ENCODE measurements at regions of chr18 and their contacts with region 1.

Region 1: DNA sequence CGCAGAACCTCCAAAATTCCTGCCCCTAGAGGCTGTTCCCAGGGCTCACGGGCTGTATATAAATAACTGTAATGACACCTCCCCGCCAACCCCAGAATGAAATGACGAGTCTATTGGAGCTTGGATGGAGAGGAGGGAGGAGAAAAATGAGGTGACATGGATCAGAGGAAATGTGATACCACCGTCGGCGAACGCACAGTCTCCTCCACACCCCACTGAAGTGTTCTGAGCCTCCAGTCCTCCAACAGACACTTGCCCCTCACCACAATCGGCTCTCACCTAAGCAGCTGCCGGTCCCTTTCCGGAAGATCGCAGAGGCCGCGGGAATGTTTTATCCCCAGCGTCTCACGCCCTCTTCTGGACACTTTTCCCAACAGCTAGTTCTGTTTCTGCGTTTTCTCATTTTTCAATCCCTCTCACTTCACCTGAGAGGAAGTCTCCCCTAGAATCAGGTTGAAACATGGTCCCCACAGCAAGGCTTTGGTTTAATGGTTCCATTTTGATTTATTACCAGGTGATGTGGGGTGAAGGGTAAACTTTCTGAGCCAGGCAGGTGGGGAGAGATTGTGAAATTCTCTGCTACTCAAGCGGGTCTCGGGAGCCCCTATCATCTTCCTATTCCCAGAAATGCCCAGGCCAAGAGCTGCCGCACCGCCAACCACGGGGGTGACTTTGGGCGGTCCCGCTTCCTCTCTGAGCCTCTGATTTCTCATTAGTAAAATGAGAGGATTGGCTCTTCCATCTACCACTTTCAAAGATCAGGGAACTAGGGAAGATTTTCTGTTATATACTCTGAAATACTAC is 9.1 kb upstream of the MYO5B start:
- DNase-seq: no peak
- ATAC-seq: peak; percentile 68
- H3K4me3 ChIP-seq: no peak overlapping the region
- H3K27ac ChIP-seq: no peak overlapping the region
- H3K4me1 ChIP-seq: no peaks in the 10 kb centered on the region
- H3K27me3 ChIP-seq: peaks cover 1 to 4% of the 10 kb centered on the region in 2 experiments; a peak in 2 of 4 replicates
- CTCF ChIP-seq: peak; percentile 52 to 65 (median 52); a peak in 5 of 6 replicates
- EP300 ChIP-seq: no peak
- POLR2A ChIP-seq: no peak
- RAD21 ChIP-seq: peak; percentile 72

Region 2: GRCh38 chr18:49858309-49859020 is 345.5 kb before region 1 on chr18:
- CTCF ChIA-PET with region 1: interaction called, 14 read pairs
- POLR2A ChIA-PET with region 1: no interaction called
- RAD21 ChIA-PET with region 1: interaction called, 12 read pairs
- SMC1A ChIA-PET with region 1: interaction called, 5 read pairs
- in situ Hi-C with region 1: no loop called
- intact Hi-C with region 1: loop called (anchors 10 kb)
- DNase-seq: no peak
- ATAC-seq: peak; percentile 70
- H3K4me3 ChIP-seq: no peak overlapping the region
- H3K27ac ChIP-seq: no peak overlapping the region
- H3K4me1 ChIP-seq: no peaks in the 10 kb centered on the region
- H3K27me3 ChIP-seq: no peaks in the 10 kb centered on the region; a peak in 1 of 4 replicates
- CTCF ChIP-seq: peak; percentile 80 to 90 (median 84)
- EP300 ChIP-seq: no peak
- POLR2A ChIP-seq: no peak
- RAD21 ChIP-seq: peak; percentile 99

Region 3: GRCh38 chr18:49980896-49981295 is 223.1 kb before region 1 on chr18:
- CTCF ChIA-PET with region 1: no interaction called
- POLR2A ChIA-PET with region 1: no interaction called
- RAD21 ChIA-PET with region 1: no interaction called
- SMC1A ChIA-PET with region 1: no interaction called
- in situ Hi-C with region 1: no loop called
- intact Hi-C with region 1: no loop called
- DNase-seq: no peak
- ATAC-seq: no peak
- H3K4me3 ChIP-seq: no peak overlapping the region
- H3K27ac ChIP-seq: no peak overlapping the region
- H3K4me1 ChIP-seq: no peaks in the 10 kb centered on the region
- H3K27me3 ChIP-seq: peaks cover 4 to 7% of the 10 kb centered on the region in 2 experiments; a peak in 3 of 4 replicates
- CTCF ChIP-seq: no peak
- EP300 ChIP-seq: no peak
- POLR2A ChIP-seq: no peak
- RAD21 ChIP-seq: no peak

Region 4: DNA sequence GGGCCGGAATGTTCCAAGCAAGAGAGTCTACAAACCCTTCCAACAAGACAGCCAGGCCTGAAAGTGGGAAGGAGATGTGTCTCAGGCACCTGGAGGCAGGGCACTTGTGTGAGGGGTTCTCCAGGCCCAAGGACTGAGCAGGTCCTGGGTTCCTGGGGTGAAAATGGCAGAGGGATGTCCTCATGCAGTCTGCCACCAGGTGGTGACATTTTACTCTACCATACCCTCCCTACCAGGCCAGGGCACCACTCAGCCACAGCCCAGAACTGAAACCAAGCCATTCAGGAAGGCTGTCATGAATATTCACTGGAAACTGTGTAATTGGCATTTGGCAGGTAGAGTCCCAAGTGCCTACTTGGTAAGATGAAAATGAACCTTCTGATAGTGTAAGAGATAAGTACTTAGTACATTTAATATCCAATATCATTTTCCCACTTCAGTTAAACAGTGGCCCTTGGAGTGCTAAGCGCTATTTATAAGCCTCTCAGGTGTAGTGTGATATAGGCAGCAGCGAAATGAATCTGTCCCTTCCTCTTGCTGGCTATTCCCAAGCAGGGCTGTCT is 194.1 kb before region 1 on chr18:
- CTCF ChIA-PET with region 1: interaction called, 30 read pairs
- POLR2A ChIA-PET with region 1: no interaction called
- RAD21 ChIA-PET with region 1: interaction called, 15 read pairs
- SMC1A ChIA-PET with region 1: interaction called, 12 read pairs
- in situ Hi-C with region 1: no loop called
- intact Hi-C with region 1: loop called (anchors 1 kb)
- DNase-seq: peak; percentile 25
- ATAC-seq: peak; percentile 99
- H3K4me3 ChIP-seq: no peak overlapping the region
- H3K27ac ChIP-seq: no peak overlapping the region
- H3K4me1 ChIP-seq: no peaks in the 10 kb centered on the region
- H3K27me3 ChIP-seq: no peaks in the 10 kb centered on the region
- CTCF ChIP-seq: peak; percentile 69 to 73 (median 72); a peak in 5 of 6 replicates
- EP300 ChIP-seq: no peak
- POLR2A ChIP-seq: no peak
- RAD21 ChIP-seq: peak; percentile 63

Region 5: DNA sequence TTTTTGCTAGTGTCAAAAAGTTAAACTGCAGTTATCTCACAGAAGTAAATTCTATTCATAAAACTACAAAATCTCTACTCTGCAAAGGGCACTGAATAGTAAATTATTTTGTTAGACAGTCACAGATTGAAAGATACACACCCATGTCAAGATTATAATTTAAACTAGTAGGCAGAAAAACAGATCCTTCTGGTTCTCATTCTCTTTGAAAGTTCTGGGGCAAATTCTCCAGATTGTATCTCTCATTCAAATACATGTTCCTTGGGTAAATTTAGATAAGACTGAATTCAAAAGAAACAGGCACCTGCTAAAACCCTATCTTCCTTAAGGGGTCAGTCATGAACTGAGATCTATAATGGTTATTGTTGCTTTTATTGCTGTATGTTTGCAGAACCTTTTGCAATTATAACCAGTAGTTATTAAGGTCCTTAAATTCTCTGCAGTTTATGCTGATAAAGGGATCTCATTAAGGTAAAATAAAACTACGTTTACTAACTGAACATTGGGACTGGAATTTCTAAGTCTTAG is 92.7 kb before region 1 on chr18:
- CTCF ChIA-PET with region 1: interaction called, 11 read pairs
- POLR2A ChIA-PET with region 1: no interaction called
- RAD21 ChIA-PET with region 1: interaction called, 6 read pairs
- SMC1A ChIA-PET with region 1: interaction called, 9 read pairs
- in situ Hi-C with region 1: no loop called
- intact Hi-C with region 1: no loop called
- DNase-seq: no peak
- ATAC-seq: peak; percentile 52; the same call in 2 of the 3 replicates
- H3K4me3 ChIP-seq: no peak overlapping the region
- H3K27ac ChIP-seq: no peak overlapping the region
- H3K4me1 ChIP-seq: no peaks in the 10 kb centered on the region
- H3K27me3 ChIP-seq: peaks cover 0 to 12% of the 10 kb centered on the region in 2 experiments; a peak in 2 of 4 replicates
- CTCF ChIP-seq: peak; percentile 7 to 52 (median 21); a peak in 4 of 6 replicates
- EP300 ChIP-seq: no peak
- POLR2A ChIP-seq: no peak
- RAD21 ChIP-seq: peak; percentile 63

Region 6: GRCh38 chr18:50218432-50219197 is 14.6 kb after region 1 on chr18:
- CTCF ChIA-PET with region 1: interaction called, 24 read pairs
- POLR2A ChIA-PET with region 1: no interaction called
- RAD21 ChIA-PET with region 1: interaction called, 6 read pairs
- SMC1A ChIA-PET with region 1: interaction called, 8 read pairs
- in situ Hi-C with region 1: no loop called
- intact Hi-C with region 1: no loop called
- DNase-seq: peak; percentile 21
- ATAC-seq: peak; percentile 98
- H3K4me3 ChIP-seq: no peak overlapping the region
- H3K27ac ChIP-seq: no peak overlapping the region
- H3K4me1 ChIP-seq: peaks cover 5% of the 10 kb centered on the region
- H3K27me3 ChIP-seq: no peaks in the 10 kb centered on the region; a peak in 1 of 4 replicates
- CTCF ChIP-seq: peak; percentile 47 to 63 (median 50); a peak in 4 of 6 replicates
- EP300 ChIP-seq: no peak
- POLR2A ChIP-seq: no peak
- RAD21 ChIP-seq: peak; percentile 69